ENCODE measurements at regions of chr15 and their contacts with region 1.

Region 1: DNA sequence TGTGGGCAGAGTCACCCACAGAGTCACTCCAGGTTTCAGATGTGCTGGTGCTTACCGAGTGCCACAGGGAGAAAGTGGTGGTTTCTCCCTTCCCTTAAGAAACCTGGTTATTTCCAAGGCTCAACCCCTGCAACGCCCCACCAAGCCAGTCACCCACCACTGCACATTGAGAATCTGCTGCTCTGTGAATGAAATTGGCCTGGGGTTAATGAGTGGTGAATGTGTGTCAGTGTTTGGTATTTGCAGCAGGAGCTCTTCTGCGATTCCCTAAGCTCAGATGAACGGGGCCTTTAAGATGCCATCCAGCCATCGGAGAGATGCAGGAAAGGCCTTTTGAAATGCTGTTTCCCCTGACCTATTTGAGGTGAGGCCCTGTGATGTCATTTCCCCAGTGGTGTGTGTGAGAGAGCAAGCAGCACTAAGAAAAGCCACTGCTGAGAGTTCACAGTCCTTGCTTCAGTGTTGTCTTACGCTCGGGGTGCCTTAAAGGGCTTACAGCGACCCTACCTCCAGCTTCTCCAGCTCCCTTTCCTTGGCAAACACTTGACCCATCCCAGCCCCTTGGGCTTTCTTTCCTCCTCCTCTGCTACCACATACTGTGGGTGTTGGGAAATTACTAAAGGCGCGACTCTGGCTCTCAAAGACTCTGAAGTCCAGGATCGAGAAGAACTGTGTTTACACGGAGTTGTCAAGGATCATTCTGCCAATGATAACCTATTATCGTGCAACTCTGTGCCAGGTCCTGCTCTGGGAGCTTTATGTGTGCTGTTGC is 68.9 kb downstream of the SMAD3 start:
- DNase-seq: peak; percentile 56
- H3K4me3 Mint-ChIP-seq: peak overlapping the region; percentile 79
- H3K27ac Mint-ChIP-seq: peak overlapping the region; percentile 97
- H3K4me1 Mint-ChIP-seq: peaks cover 81% of the 10 kb centered on the region
- H3K27me3 Mint-ChIP-seq: no peaks in the 10 kb centered on the region

Region 2: GRCh38 chr15:67085818-67086636 is 48.2 kb before region 1 on chr15:
- intact Hi-C with region 1: loop called (anchors 1 kb)
- DNase-seq: peak; percentile 44
- H3K4me3 Mint-ChIP-seq: peak overlapping the region; percentile 24
- H3K27ac Mint-ChIP-seq: peak overlapping the region; percentile 74
- H3K4me1 Mint-ChIP-seq: peaks cover 94% of the 10 kb centered on the region
- H3K27me3 Mint-ChIP-seq: no peaks in the 10 kb centered on the region

Region 3: DNA sequence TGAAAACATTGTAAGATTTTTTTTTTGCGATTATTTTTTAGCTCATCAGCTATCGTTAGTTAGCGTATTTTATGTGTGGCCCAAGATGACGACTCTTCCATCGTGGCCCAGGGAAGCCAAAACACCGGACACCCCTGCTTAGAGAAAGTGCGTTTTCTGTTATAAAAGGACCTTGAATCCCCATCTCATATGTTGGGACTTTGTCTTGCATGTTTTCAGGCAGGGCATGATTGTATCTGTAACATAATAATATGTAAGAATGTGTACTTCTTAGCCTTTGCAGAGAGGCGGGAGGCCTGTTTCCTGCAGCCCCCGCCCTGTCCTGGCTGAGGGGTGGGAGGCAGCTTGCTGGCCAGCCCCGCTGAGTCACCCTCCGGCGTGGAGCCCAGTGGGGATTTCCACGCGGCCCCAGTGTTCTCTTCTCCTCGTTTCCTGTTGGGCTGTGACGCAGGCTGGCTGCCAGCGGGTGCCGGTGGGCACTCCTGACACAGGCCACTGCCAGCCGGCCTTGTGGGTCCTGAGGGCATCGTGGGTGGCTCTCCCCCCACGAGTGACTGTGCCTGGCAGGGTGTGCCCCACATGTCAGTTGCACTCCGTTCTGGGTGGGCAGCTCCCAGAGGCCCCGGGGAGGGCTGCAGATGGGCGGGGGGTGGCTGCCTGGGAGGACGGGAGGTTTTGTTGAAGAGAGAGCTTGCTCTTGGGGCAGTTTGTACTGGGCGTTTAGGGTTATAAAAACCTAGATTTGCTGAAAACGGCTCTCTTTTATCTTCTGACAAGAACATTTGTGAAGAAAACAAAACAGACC is 13.2 kb before region 1 on chr15:
- intact Hi-C with region 1: loop called (anchors 1 kb)
- DNase-seq: peak; percentile 77
- H3K4me3 Mint-ChIP-seq: peak overlapping the region; percentile 53
- H3K27ac Mint-ChIP-seq: peak overlapping the region; percentile 94
- H3K4me1 Mint-ChIP-seq: peaks cover 76% of the 10 kb centered on the region
- H3K27me3 Mint-ChIP-seq: no peaks in the 10 kb centered on the region

Region 4: DNA sequence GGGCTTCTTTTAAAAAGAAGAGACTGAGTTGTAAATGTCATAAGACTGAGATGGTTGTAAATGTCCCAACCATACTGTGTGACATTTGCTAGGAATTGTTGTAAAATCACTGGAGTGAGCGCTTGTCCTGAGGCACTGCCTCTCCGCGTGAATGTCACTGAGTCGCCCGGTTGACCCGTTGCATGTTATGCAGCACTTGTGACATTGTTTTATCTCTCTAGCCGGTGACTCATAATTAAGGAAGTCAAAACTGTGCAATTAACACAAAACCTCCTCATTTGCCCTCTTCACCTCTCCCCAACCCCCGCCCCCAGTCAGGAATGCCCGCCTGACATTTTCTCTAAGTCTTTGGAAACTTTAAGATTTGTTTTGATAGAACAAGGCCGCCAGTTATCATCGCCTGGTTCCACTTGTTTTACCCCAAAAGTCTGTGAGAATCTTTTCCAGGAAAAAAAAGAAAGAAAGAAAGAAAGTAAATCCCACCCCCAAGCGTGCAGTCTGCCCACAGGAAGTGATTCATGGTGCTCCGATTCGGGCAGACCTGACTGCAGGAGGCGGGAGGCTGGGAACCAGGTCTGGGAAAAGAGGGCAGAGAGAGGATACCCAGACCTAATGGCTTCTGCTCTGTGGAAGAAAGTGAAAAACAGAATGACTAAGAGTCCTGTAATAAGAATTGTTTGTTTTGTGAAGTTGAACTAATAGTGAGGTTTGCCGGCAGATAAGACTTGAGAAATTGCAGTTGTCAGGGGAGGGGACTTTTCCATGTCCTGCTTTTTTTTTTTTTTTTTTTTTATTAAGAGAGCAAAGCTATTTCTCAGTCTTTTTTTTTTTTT is 16.0 kb after region 1 on chr15:
- intact Hi-C with region 1: loop called (anchors 2 kb)
- DNase-seq: no peak
- H3K4me3 Mint-ChIP-seq: peak overlapping the region; percentile 46
- H3K27ac Mint-ChIP-seq: peak overlapping the region; percentile 71
- H3K4me1 Mint-ChIP-seq: peaks cover 60% of the 10 kb centered on the region
- H3K27me3 Mint-ChIP-seq: no peaks in the 10 kb centered on the region